ENCODE measurements at regions of chr10 and their contacts with region 1.

Region 1: GRCh38 chr10:61903221-61903927 is 1.9 kb downstream of the ARID5B start:
- DNase-seq: peak; percentile 79
- H3K4me3 ChIP-seq: peak overlapping the region; percentile 68
- H3K27ac ChIP-seq: peak overlapping the region; percentile 85
- H3K4me1 ChIP-seq: peaks cover 43% of the 10 kb centered on the region
- H3K27me3 ChIP-seq: no peaks in the 10 kb centered on the region
- CTCF ChIP-seq: 0 out of 2 replicates have a peak, but pooled peaks have one; percentile 36

Region 2: GRCh38 chr10:60816628-60817397 is 1086.6 kb before region 1 on chr10:
- CTCF ChIA-PET with region 1: no interaction called
- POLR2A ChIA-PET with region 1: no interaction called
- intact Hi-C with region 1: loop called (anchors 5 kb)
- DNase-seq: peak; percentile 90
- H3K4me3 ChIP-seq: no peak overlapping the region
- H3K27ac ChIP-seq: no peak overlapping the region
- H3K4me1 ChIP-seq: peaks cover 34% of the 10 kb centered on the region
- H3K27me3 ChIP-seq: no peaks in the 10 kb centered on the region
- CTCF ChIP-seq: peak; percentile 90

Region 3: DNA sequence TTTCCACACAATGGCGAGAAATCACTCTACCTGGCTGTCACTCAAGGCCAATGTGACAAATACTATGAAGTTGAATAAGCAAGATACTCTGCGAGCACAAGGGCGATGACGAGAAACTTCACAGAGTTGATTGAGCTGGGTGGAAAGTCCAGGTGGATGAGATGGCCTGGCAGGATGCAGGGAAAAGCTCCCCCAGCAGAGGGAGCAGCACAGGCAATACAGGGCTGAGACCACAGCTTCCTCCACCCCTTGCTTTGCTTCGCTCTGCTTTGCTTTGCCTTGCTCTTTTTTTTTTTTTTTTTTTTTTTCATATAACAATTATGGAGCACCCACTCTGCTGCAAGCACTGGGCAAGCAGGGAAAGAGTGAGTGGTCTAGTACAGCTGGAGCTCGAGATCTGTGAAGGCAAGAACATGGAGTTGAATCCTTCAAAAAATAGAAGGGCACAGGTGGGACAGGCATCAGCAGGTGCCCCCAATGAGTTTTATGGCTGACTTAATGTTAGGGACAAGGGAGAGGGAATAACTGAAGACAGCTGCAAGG is 152.4 kb before region 1 on chr10:
- CTCF ChIA-PET with region 1: interaction called, 7 read pairs
- POLR2A ChIA-PET with region 1: no interaction called
- intact Hi-C with region 1: loop called (anchors 2 kb)
- DNase-seq: peak; percentile 83
- H3K4me3 ChIP-seq: no peak overlapping the region
- H3K27ac ChIP-seq: peak overlapping the region; percentile 78
- H3K4me1 ChIP-seq: peaks cover 70% of the 10 kb centered on the region
- H3K27me3 ChIP-seq: no peaks in the 10 kb centered on the region
- CTCF ChIP-seq: peak; percentile 87

Region 4: DNA sequence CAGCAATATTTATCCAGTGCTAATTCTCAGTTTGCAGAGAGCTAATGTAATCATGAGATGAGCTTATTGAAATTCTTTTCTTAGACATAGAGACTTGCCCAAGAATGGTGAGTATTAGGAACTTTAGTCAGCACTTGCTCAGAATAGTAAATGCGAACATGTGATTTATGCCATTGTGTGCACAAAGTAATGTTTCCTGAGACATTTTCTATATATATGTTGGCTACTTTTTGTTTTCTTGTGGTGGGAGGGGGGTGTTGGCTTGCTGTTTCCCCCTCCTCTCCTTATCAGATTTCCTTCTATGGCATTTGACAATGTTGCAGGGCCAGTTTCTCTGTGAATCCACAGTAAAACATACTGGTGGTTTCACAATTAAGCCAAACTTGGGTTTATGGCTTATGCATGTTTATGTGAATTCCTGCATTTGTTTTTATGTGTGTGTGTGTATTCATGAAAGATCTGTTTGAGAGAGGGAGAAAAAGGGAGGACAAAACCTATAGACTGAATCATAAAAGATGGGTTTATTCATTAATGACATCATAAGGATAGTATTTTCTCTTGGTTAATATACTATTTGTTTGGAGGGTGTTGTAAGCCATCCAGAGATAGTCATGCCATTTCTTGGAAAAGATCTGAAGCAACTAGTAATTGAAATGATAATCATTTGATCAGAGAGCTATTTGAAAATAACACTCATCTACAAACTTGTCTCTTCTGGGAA is 34.4 kb after region 1 on chr10:
- CTCF ChIA-PET with region 1: interaction called, 4 read pairs
- POLR2A ChIA-PET with region 1: no interaction called
- intact Hi-C with region 1: loop called (anchors 5 kb)
- DNase-seq: peak; percentile 35
- H3K4me3 ChIP-seq: no peak overlapping the region
- H3K27ac ChIP-seq: peak overlapping the region; percentile 66
- H3K4me1 ChIP-seq: peaks cover 57% of the 10 kb centered on the region
- H3K27me3 ChIP-seq: no peaks in the 10 kb centered on the region
- CTCF ChIP-seq: no peak

Region 5: DNA sequence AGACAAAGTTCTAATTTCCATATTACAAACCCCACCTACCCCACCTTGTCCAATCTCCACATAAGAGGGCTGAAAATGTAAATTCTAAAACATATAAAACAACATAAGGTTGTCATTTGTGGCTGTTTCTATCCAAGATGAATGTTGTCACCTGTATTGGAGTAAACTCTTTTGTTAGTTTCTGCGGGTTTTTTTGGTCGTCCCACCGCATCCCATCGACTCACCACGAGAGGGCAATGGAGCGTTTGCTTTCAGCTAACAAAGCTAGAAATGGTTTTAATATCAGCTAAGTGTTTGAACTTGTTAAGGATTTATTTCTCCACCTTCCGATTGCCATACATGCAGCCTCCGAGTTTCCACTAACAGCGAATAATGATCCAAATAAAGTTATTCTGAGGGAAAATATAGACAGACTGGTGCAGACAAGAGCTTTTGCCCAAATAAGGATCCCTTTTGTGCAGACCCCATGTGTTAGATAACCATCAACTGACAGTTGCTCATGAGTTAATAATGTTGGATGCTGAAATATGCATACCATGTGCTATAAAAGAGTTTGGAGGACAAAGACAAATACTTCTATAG is 135.3 kb after region 1 on chr10:
- CTCF ChIA-PET with region 1: interaction called, 4 read pairs
- POLR2A ChIA-PET with region 1: no interaction called
- intact Hi-C with region 1: loop called (anchors 2 kb)
- DNase-seq: peak; percentile 93
- H3K4me3 ChIP-seq: peak overlapping the region; percentile 5
- H3K27ac ChIP-seq: peak overlapping the region; percentile 79
- H3K4me1 ChIP-seq: peaks cover 85% of the 10 kb centered on the region
- H3K27me3 ChIP-seq: no peaks in the 10 kb centered on the region
- CTCF ChIP-seq: peak; percentile 94

Region 6: GRCh38 chr10:62048919-62049623 is 145.7 kb after region 1 on chr10:
- CTCF ChIA-PET with region 1: no interaction called
- POLR2A ChIA-PET with region 1: no interaction called
- intact Hi-C with region 1: no loop called
- DNase-seq: peak; percentile 89
- H3K4me3 ChIP-seq: peak overlapping the region; percentile 53
- H3K27ac ChIP-seq: peak overlapping the region; percentile 89
- H3K4me1 ChIP-seq: peaks cover 61% of the 10 kb centered on the region
- H3K27me3 ChIP-seq: no peaks in the 10 kb centered on the region
- CTCF ChIP-seq: no peak

Region 7: DNA sequence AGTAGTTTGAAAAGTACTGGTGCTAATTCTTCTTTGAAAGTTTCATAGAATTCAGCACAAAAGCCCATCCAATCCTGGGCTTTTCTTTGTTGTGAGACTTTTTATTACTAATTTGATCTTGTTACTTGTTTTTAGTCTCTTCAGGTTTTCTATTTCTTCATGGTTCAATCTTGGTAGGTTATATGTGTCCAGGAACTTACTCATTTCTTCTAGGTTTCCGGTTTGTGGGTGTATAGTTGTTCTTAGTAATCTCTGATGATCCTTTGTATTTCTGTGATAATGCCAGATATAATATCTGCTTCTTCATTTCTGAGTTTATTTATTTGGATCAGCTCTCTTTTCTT is 217.8 kb after region 1 on chr10:
- CTCF ChIA-PET with region 1: no interaction called
- POLR2A ChIA-PET with region 1: no interaction called
- intact Hi-C with region 1: no loop called
- DNase-seq: no peak
- H3K4me3 ChIP-seq: no peak overlapping the region
- H3K27ac ChIP-seq: no peak overlapping the region
- H3K4me1 ChIP-seq: no peaks in the 10 kb centered on the region
- H3K27me3 ChIP-seq: no peaks in the 10 kb centered on the region
- CTCF ChIP-seq: no peak

Region 8: DNA sequence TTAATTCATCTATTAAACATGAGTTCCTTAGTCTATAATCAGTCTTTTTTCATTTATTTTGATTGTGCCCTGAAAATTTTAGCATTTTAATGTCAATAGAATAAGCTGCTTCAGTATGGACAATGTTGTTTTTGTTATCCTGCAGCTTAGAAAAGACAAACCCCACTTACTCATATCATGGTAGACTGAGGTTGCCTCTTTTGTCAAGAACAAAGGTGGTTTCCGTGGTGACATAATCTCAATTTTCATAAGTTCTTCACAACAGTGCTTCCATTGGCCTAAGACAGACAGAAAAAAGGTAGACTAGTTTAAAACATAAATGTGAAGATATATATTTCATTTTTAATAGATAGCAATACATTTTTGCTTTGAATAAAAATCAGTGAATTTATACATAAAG is 296.2 kb after region 1 on chr10:
- CTCF ChIA-PET with region 1: no interaction called
- POLR2A ChIA-PET with region 1: interaction called, 3 read pairs
- intact Hi-C with region 1: loop called (anchors 1 kb)
- DNase-seq: no peak
- H3K4me3 ChIP-seq: no peak overlapping the region
- H3K27ac ChIP-seq: no peak overlapping the region
- H3K4me1 ChIP-seq: peaks cover 51% of the 10 kb centered on the region
- H3K27me3 ChIP-seq: no peaks in the 10 kb centered on the region
- CTCF ChIP-seq: no peak

Region 9: DNA sequence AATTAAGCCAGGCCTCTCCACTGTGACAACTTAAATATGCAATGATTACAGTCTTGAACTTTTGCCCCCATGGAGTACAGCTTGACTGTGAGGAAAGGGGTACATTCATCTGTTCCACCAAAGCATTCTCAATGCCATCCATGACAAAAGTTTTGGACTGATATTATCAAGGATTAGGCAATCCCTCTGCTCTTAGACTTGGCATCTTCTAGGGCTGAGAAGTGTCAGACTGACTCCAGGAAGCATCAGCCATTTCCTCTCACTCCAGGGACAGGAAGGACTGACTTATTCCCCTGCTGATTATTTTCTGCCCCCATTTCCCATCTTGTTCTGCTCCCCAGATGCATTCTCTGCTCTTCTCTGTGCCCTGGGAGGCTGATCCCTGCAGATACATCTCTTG is 540.5 kb after region 1 on chr10:
- CTCF ChIA-PET with region 1: no interaction called
- POLR2A ChIA-PET with region 1: no interaction called
- intact Hi-C with region 1: loop called (anchors 10 kb)
- DNase-seq: peak; percentile 99
- H3K4me3 ChIP-seq: no peak overlapping the region
- H3K27ac ChIP-seq: peak overlapping the region; percentile 78
- H3K4me1 ChIP-seq: peaks cover 37% of the 10 kb centered on the region
- H3K27me3 ChIP-seq: no peaks in the 10 kb centered on the region
- CTCF ChIP-seq: no peak